Activated CD4-positive, alpha-beta memory T cell treated with anti-CD3 and anti-CD28 coated beads for 36 hours (primary cell): ENCODE measurements at regions of chr4 and their contacts with region 1.

Region 1: GRCh38 chr4:56435306-56435926 is at the start of gene PPAT:
- DNase-seq: peak; percentile 99
- H3K4me3 Mint-ChIP-seq: peak within 1 kb of the TSS; percentile 98
- H3K27ac Mint-ChIP-seq: peak within 1 kb of the TSS; percentile 95
- H3K4me1 Mint-ChIP-seq: peaks cover 39% of the 10 kb centered on the region
- H3K27me3 Mint-ChIP-seq: no peaks in the 10 kb centered on the region
- total RNA-seq, gene PPAT: 34.4 to 37.7 TPM

Region 2: GRCh38 chr4:55546756-55547465 is 888.5 kb before region 1 on chr4 and contains the start of gene CLOCK:
- CTCF ChIA-PET with region 1: no interaction called
- POLR2A ChIA-PET with region 1: no interaction called
- intact Hi-C with region 1: loop called (anchors 1 kb)
- DNase-seq: peak; percentile 88
- H3K4me3 Mint-ChIP-seq: peak within 1 kb of the TSS; percentile 88
- H3K27ac Mint-ChIP-seq: peak within 1 kb of the TSS; percentile 86
- H3K4me1 Mint-ChIP-seq: peaks cover 52% of the 10 kb centered on the region
- H3K27me3 Mint-ChIP-seq: peaks cover 5% of the 10 kb centered on the region
- total RNA-seq, gene CLOCK: 10.9 to 12.0 TPM

Region 3: GRCh38 chr4:55920571-55920970 is 514.8 kb before region 1 on chr4:
- CTCF ChIA-PET with region 1: no interaction called
- POLR2A ChIA-PET with region 1: no interaction called
- intact Hi-C with region 1: no loop called
- DNase-seq: no peak
- H3K4me3 Mint-ChIP-seq: no peak overlapping the region
- H3K27ac Mint-ChIP-seq: no peak overlapping the region
- H3K4me1 Mint-ChIP-seq: no peaks in the 10 kb centered on the region
- H3K27me3 Mint-ChIP-seq: no peaks in the 10 kb centered on the region

Region 4: GRCh38 chr4:56183344-56183959 is 252.0 kb before region 1 on chr4:
- CTCF ChIA-PET with region 1: no interaction called
- POLR2A ChIA-PET with region 1: no interaction called
- intact Hi-C with region 1: no loop called
- DNase-seq: no peak
- H3K4me3 Mint-ChIP-seq: no peak overlapping the region
- H3K27ac Mint-ChIP-seq: no peak overlapping the region
- H3K4me1 Mint-ChIP-seq: peaks cover 11% of the 10 kb centered on the region
- H3K27me3 Mint-ChIP-seq: peaks cover 5% of the 10 kb centered on the region

Region 5: GRCh38 chr4:56410235-56411062 is 25.0 kb before region 1 on chr4:
- CTCF ChIA-PET with region 1: no interaction called
- POLR2A ChIA-PET with region 1: interaction called, 5 read pairs
- intact Hi-C with region 1: loop called (anchors 2 kb)
- DNase-seq: no peak
- H3K4me3 Mint-ChIP-seq: no peak overlapping the region
- H3K27ac Mint-ChIP-seq: no peak overlapping the region
- H3K4me1 Mint-ChIP-seq: peaks cover 16% of the 10 kb centered on the region
- H3K27me3 Mint-ChIP-seq: no peaks in the 10 kb centered on the region

Region 6: DNA sequence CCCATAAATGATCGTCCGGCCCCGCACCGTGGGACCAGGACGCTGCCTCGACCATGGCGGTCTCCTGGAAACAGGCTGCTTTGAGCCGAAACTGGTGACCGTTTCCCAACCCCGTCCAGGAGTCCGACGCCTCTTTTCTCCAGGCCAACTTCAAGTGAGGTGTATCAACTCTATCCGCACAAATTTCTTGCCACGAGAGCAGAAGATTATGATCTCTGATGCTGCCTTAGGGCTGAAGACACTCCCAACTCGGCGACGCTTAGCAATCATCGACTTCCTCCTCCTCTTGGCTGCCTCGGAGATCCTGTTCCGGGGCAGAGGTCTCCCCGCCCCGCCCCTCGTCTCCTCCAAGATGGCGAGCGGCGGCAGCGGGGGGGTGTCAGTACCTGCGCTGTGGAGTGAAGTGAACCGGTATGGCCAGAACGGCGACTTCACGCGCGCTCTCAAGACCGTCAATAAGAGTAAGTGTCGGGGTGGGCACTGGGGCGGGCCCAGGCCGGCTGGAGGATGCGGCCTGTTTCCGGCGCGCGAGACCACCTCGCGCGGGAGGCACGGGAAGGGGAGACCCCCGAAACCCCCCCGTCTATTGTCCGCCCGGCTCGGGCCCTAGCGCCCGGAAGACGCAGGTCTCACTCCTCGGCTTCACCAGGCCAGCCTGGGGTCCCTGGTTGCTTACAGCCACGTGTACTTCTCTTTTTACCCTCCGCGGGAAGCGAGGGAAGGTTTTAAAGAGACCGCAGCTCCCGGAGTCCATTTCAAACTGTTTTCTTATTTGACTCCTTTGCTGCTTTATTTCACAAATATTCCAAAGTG is 32.1 kb after region 1 on chr4 and contains the start of gene SRP72:
- CTCF ChIA-PET with region 1: interaction called, 11 read pairs
- POLR2A ChIA-PET with region 1: interaction called, 31 read pairs
- intact Hi-C with region 1: loop called (anchors 1 kb)
- DNase-seq: peak; percentile 92
- H3K4me3 Mint-ChIP-seq: peak within 1 kb of the TSS; percentile 98
- H3K27ac Mint-ChIP-seq: peak within 1 kb of the TSS; percentile 97
- H3K4me1 Mint-ChIP-seq: peaks cover 37% of the 10 kb centered on the region
- H3K27me3 Mint-ChIP-seq: no peaks in the 10 kb centered on the region
- total RNA-seq, gene SRP72: 183 to 184 TPM

Region 7: GRCh38 chr4:56907489-56908205 is 472.2 kb after region 1 on chr4 and contains the start of gene REST:
- CTCF ChIA-PET with region 1: no interaction called
- POLR2A ChIA-PET with region 1: interaction called, 6 read pairs
- intact Hi-C with region 1: loop called (anchors 1 kb)
- DNase-seq: peak; percentile 80
- H3K4me3 Mint-ChIP-seq: peak within 1 kb of the TSS; percentile 88
- H3K27ac Mint-ChIP-seq: peak within 1 kb of the TSS; percentile 55
- H3K4me1 Mint-ChIP-seq: peaks cover 41% of the 10 kb centered on the region
- H3K27me3 Mint-ChIP-seq: no peaks in the 10 kb centered on the region
- total RNA-seq, gene REST: 46.1 to 47.0 TPM